ENCODE measurements at regions of chr6 and their contacts with region 1.

Region 1: GRCh38 chr6:158644231-158645063 is at the start of gene DYNLT1:
- DNase-seq: peak; percentile 91
- ATAC-seq: peak; percentile 83
- H3K4me3 ChIP-seq: peak within 1 kb of the TSS; percentile 89 to 91
- H3K27ac ChIP-seq: peak within 1 kb of the TSS; percentile 97
- H3K4me1 ChIP-seq: peaks cover 60 to 73% of the 10 kb centered on the region in 2 experiments
- H3K27me3 ChIP-seq: no peaks in the 10 kb centered on the region
- CTCF ChIP-seq: no peak
- POLR2A ChIP-seq: peak; percentile 75
- RAD21 ChIP-seq: no peak
- total RNA-seq, gene DYNLT1: 239 TPM

Region 2: GRCh38 chr6:158672726-158673125 is 28.3 kb after region 1 on chr6:
- CTCF ChIA-PET with region 1: interaction called, 12 read pairs
- POLR2A ChIA-PET with region 1: interaction called, 4 read pairs
- RAD21 ChIA-PET with region 1: interaction called in 1 of 2 experiments, 5 read pairs
- intact Hi-C with region 1: no loop called
- DNase-seq: no peak
- ATAC-seq: no peak
- H3K4me3 ChIP-seq: no peak overlapping the region
- H3K27ac ChIP-seq: no peak overlapping the region
- H3K4me1 ChIP-seq: peaks cover 0 to under 1% of the 10 kb centered on the region in 2 experiments; a peak in 2 of 4 replicates
- H3K27me3 ChIP-seq: no peaks in the 10 kb centered on the region
- CTCF ChIP-seq: no peak
- POLR2A ChIP-seq: no peak
- RAD21 ChIP-seq: no peak

Region 3: DNA sequence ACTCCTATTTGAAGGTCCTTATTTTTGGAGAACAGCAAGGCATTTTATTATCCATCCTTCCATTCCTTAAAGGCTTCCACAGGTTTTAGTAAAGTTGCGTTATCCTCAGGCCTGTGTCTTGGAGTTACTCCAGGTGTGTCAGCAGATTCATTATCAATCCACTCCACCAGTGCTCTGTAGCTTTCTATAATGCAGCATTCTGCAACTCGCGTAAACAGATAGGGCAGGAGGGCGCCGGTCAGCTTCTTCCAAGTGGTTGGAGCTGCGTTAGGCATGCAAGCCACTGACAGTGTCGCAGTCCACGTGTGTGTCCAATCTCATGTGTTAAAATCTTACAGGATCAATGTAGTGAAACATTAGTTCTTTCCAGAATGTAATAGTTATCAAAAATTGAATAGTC is 81.3 kb after region 1 on chr6:
- CTCF ChIA-PET with region 1: no interaction called
- POLR2A ChIA-PET with region 1: no interaction called
- RAD21 ChIA-PET with region 1: no interaction called
- intact Hi-C with region 1: no loop called
- DNase-seq: no peak
- ATAC-seq: no peak
- H3K4me3 ChIP-seq: no peak overlapping the region
- H3K27ac ChIP-seq: peak overlapping the region; percentile 97
- H3K4me1 ChIP-seq: peaks cover 49 to 90% of the 10 kb centered on the region in 2 experiments
- H3K27me3 ChIP-seq: no peaks in the 10 kb centered on the region
- CTCF ChIP-seq: no peak
- POLR2A ChIP-seq: no peak
- RAD21 ChIP-seq: no peak

Region 4: GRCh38 chr6:158999666-159000403 is 355.4 kb after region 1 on chr6 and contains the start of gene RSPH3:
- CTCF ChIA-PET with region 1: no interaction called
- POLR2A ChIA-PET with region 1: no interaction called
- RAD21 ChIA-PET with region 1: no interaction called
- intact Hi-C with region 1: loop called (anchors 10 kb)
- DNase-seq: peak; percentile 96
- ATAC-seq: peak; percentile 80
- H3K4me3 ChIP-seq: peak within 1 kb of the TSS; percentile 88 to 92
- H3K27ac ChIP-seq: peak within 1 kb of the TSS; percentile 85
- H3K4me1 ChIP-seq: peaks cover 37 to 69% of the 10 kb centered on the region in 2 experiments
- H3K27me3 ChIP-seq: no peaks in the 10 kb centered on the region
- CTCF ChIP-seq: 0 out of 6 replicates have a peak, but pooled peaks of 1 of the 3 experiments have one; percentile 7
- POLR2A ChIP-seq: peak; percentile 94
- RAD21 ChIP-seq: no peak
- total RNA-seq, gene RSPH3: 24.7 TPM

Region 5: GRCh38 chr6:159203304-159204005 is 559.0 kb after region 1 on chr6:
- CTCF ChIA-PET with region 1: no interaction called
- POLR2A ChIA-PET with region 1: no interaction called
- RAD21 ChIA-PET with region 1: no interaction called
- intact Hi-C with region 1: no loop called
- DNase-seq: no peak
- ATAC-seq: no peak
- H3K4me3 ChIP-seq: no peak overlapping the region
- H3K27ac ChIP-seq: no peak overlapping the region
- H3K4me1 ChIP-seq: no peaks in the 10 kb centered on the region
- H3K27me3 ChIP-seq: peaks cover 32% of the 10 kb centered on the region
- CTCF ChIP-seq: no peak
- POLR2A ChIP-seq: no peak
- RAD21 ChIP-seq: no peak